K562 (cell line): ENCODE measurements at regions of chr20 and their contacts with region 1.

Region 1: GRCh38 chr20:21505161-21505809 is 8.6 kb downstream of the NKX2-2 start:
- DNase-seq: peak; percentile 64 to 70 (median 68)
- ATAC-seq: peak; percentile 82
- H3K4me3 ChIP-seq: peak overlapping the region; percentile 35
- H3K27ac ChIP-seq: no peak overlapping the region
- H3K4me1 ChIP-seq: peaks cover 0 to 16% of the 10 kb centered on the region in 2 experiments; a peak in 2 of 5 replicates
- H3K27me3 ChIP-seq: peaks cover 6 to 18% of the 10 kb centered on the region in 2 experiments; a peak in 3 of 5 replicates
- CTCF ChIP-seq: peak; percentile 83 to 88 (median 88)
- EP300 ChIP-seq: no peak
- POLR2A ChIP-seq: no peak
- RAD21 ChIP-seq: peak; percentile 89 to 94

Region 2: GRCh38 chr20:20837574-20838021 is 667.7 kb before region 1 on chr20:
- CTCF ChIA-PET with region 1: interaction called, 14 read pairs
- POLR2A ChIA-PET with region 1: no interaction called
- in situ Hi-C with region 1: loop called (anchors 10 kb)
- intact Hi-C with region 1: loop called (anchors 10 kb)
- DNase-seq: peak; percentile 25 to 51 (median 36)
- ATAC-seq: peak; percentile 81
- H3K4me3 ChIP-seq: no peak overlapping the region
- H3K27ac ChIP-seq: no peak overlapping the region
- H3K4me1 ChIP-seq: no peaks in the 10 kb centered on the region
- H3K27me3 ChIP-seq: peaks cover 0 to 11% of the 10 kb centered on the region in 2 experiments; a peak in 2 of 5 replicates
- CTCF ChIP-seq: peak; percentile 52 to 66 (median 63); a peak in 5 of 6 replicates
- EP300 ChIP-seq: no peak
- POLR2A ChIP-seq: no peak
- RAD21 ChIP-seq: peak; percentile 57 to 60; a peak in 3 of 4 replicates

Region 3: GRCh38 chr20:20860078-20860806 is 645.0 kb before region 1 on chr20:
- CTCF ChIA-PET with region 1: interaction called, 6 read pairs
- POLR2A ChIA-PET with region 1: no interaction called
- in situ Hi-C with region 1: loop called (anchors 10 kb)
- intact Hi-C with region 1: loop called (anchors 1 kb)
- DNase-seq: peak; percentile 67 to 79 (median 72)
- ATAC-seq: peak; percentile 93
- H3K4me3 ChIP-seq: no peak overlapping the region
- H3K27ac ChIP-seq: no peak overlapping the region
- H3K4me1 ChIP-seq: no peaks in the 10 kb centered on the region
- H3K27me3 ChIP-seq: peaks cover 0 to 3% of the 10 kb centered on the region in 2 experiments; a peak in 2 of 5 replicates
- CTCF ChIP-seq: peak; percentile 74 to 96 (median 85)
- EP300 ChIP-seq: no peak
- POLR2A ChIP-seq: no peak
- RAD21 ChIP-seq: peak; percentile 55 to 76

Region 4: GRCh38 chr20:21048841-21049273 is 456.4 kb before region 1 on chr20:
- CTCF ChIA-PET with region 1: no interaction called
- POLR2A ChIA-PET with region 1: no interaction called
- in situ Hi-C with region 1: loop called (anchors 10 kb)
- intact Hi-C with region 1: loop called (anchors 5 kb)
- DNase-seq: peak; percentile 51 to 74 (median 70)
- ATAC-seq: peak; percentile 96
- H3K4me3 ChIP-seq: no peak overlapping the region
- H3K27ac ChIP-seq: no peak overlapping the region
- H3K4me1 ChIP-seq: no peaks in the 10 kb centered on the region
- H3K27me3 ChIP-seq: peaks cover 0 to 5% of the 10 kb centered on the region in 2 experiments; a peak in 2 of 5 replicates
- CTCF ChIP-seq: peak; percentile 67 to 79 (median 71)
- EP300 ChIP-seq: no peak
- POLR2A ChIP-seq: no peak
- RAD21 ChIP-seq: peak; percentile 35 to 62; a peak in 3 of 4 replicates

Region 5: DNA sequence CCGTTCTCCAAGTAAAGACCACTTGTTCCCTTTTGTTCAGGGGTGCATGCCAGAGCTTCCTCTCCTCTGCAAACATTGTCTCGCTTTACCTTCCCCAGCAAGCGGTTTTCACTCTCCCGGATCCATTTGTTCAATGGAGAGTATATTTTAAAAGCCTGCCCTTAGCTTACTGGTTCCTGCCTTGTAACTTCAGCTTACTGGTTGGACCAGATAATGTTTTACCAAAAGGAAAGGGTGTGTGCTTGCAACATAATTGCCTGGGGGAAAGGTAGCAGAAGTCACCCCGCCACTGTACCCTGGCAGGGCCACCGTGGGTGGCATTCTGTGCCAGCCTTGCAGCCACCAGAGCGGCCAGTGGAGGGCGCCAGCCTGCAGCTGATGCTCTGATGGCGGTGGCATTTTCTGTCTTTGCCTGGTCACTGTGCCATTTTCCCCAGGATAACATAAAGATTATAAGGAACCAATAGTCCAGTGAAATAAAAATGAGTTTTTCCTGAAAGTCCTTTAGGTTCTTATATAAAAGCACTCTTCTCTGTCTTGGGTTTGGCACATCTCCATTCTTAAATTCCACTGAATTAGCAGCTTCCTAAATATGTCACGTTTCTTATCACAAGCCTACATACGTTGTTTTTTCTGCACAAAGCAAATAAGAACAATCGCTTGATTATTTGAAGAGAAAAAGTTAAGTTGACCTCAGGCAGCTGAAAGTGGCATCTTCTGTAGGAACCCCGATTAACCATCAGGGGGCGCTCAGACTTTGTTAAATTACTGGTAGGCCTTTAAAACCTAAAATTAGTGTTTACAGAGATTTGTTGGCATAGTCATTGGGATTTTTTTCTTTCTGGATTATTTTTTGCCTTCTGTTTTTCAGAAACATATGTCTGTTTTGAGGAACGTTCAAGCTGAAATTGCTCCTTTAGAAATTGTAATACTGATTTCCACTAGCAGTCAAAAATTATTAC is 269.5 kb before region 1 on chr20:
- CTCF ChIA-PET with region 1: interaction called, 87 read pairs
- POLR2A ChIA-PET with region 1: interaction called, 3 read pairs
- in situ Hi-C with region 1: loop called (anchors 5 kb)
- intact Hi-C with region 1: loop called (anchors 1 kb)
- DNase-seq: peak; percentile 32 to 56 (median 46)
- ATAC-seq: peak; percentile 46; the same call in 2 of the 3 replicates
- H3K4me3 ChIP-seq: no peak overlapping the region
- H3K27ac ChIP-seq: no peak overlapping the region
- H3K4me1 ChIP-seq: no peaks in the 10 kb centered on the region
- H3K27me3 ChIP-seq: no peaks in the 10 kb centered on the region
- CTCF ChIP-seq: peak; percentile 70 to 80 (median 77)
- EP300 ChIP-seq: no peak
- POLR2A ChIP-seq: no peak
- RAD21 ChIP-seq: peak; percentile 62 to 67

Region 6: GRCh38 chr20:21490095-21490494 is 15.2 kb before region 1 on chr20:
- CTCF ChIA-PET with region 1: no interaction called
- POLR2A ChIA-PET with region 1: no interaction called
- in situ Hi-C with region 1: no loop called
- intact Hi-C with region 1: no loop called
- DNase-seq: no peak
- ATAC-seq: no peak
- H3K4me3 ChIP-seq: no peak overlapping the region
- H3K27ac ChIP-seq: no peak overlapping the region
- H3K4me1 ChIP-seq: no peaks in the 10 kb centered on the region
- H3K27me3 ChIP-seq: no peaks in the 10 kb centered on the region
- CTCF ChIP-seq: peak in 1 of 3 experiments; percentile 8; a peak in 1 of 6 replicates
- EP300 ChIP-seq: no peak
- POLR2A ChIP-seq: no peak
- RAD21 ChIP-seq: peak in 1 of 2 experiments; percentile 14; a peak in 1 of 4 replicates